HCT116 (cell line): ENCODE measurements at regions of chr7 and their contacts with region 1.

Region 1: GRCh38 chr7:100874577-100875355 is at the start of gene SRRT:
- DNase-seq: peak; percentile 96
- ATAC-seq: peak; percentile 92
- H3K4me3 ChIP-seq: peak within 1 kb of the TSS; percentile 97 to 98
- H3K27ac ChIP-seq: peak within 1 kb of the TSS; percentile 84
- H3K4me1 ChIP-seq: peaks cover 12 to 24% of the 10 kb centered on the region in 2 experiments
- H3K27me3 ChIP-seq: no peaks in the 10 kb centered on the region
- CTCF ChIP-seq: peak in 1 of 3 experiments; percentile 15; a peak in 1 of 6 replicates
- POLR2A ChIP-seq: peak; percentile 79
- RAD21 ChIP-seq: no peak
- total RNA-seq, gene SRRT: 252 TPM

Region 2: DNA sequence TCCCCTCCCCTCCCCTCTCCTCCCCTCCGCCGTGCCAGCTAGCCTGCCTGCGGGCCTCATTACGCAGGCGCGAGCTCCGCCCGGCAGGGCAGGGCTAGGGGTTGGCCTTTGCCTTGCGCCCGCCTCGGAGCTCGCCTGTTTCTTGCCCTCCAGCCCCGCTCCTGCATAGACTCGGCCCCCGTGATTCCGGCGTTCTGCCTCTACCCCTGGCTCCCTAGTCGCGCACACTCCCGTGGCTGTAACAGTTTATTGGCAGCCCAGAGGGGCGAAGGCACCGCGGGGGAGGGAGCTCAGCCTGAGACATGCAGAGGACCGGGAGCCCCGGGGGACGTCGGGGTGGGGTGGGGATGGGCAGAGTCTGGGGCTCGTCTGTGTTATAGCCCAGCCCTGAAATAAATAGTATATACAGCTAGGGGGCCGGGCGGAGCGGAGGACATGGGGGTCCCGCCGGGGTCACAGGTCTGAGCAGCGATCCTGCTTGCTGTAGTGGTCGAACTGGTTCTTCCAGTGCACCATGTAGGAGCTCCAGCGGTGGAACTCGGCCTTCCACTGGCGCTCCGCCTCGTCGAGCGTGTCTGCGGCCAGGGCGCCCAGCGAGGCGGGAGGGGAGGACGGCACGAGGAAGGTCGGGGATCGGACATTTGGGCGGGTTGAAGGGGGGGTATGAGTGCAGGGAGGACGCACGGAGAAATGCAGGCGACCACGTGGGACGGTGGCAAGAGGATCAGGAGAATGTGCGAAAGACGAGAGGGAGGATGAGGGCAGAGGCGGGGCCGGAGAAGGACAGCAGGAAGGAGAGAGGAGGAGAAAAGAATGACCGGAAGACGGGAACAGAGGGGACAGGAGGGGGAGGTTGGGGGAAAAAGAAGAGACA is 15.2 kb after region 1 on chr7:
- CTCF ChIA-PET with region 1: interaction called, 5 read pairs
- POLR2A ChIA-PET with region 1: interaction called, 31 read pairs
- RAD21 ChIA-PET with region 1: interaction called in 1 of 2 experiments, 4 read pairs
- intact Hi-C with region 1: no loop called
- DNase-seq: peak; percentile 80
- ATAC-seq: peak; percentile 88
- H3K4me3 ChIP-seq: peak overlapping the region; percentile 63 to 83
- H3K27ac ChIP-seq: peak overlapping the region; percentile 85
- H3K4me1 ChIP-seq: peaks cover 8 to 52% of the 10 kb centered on the region in 2 experiments
- H3K27me3 ChIP-seq: no peaks in the 10 kb centered on the region
- CTCF ChIP-seq: no peak
- POLR2A ChIP-seq: peak; percentile 84
- RAD21 ChIP-seq: no peak

Region 3: DNA sequence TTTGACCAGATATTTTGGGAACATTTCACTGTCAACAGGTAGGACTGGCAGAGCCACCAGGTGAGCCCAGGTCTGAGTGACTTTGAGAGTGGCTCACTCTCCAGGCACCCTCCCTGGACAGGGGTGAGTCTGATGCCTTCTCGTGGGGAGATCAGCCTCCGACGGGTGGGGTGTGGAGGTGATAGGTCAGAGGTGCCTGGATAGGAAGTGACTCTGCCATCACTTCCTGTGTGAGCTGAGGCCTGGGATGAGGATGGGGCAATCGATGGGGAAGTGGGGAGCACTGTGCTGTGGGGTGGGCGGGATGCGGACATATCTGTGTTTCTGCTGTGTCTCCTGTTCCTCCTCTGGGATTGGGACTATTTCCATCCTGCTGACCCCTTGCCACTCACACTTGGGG is 412.3 kb after region 1 on chr7:
- CTCF ChIA-PET with region 1: no interaction called
- POLR2A ChIA-PET with region 1: no interaction called
- RAD21 ChIA-PET with region 1: no interaction called
- intact Hi-C with region 1: no loop called
- DNase-seq: no peak
- ATAC-seq: no peak
- H3K4me3 ChIP-seq: no peak overlapping the region
- H3K27ac ChIP-seq: no peak overlapping the region
- H3K4me1 ChIP-seq: peaks cover 4 to 6% of the 10 kb centered on the region in 2 experiments; a peak in 2 of 4 replicates
- H3K27me3 ChIP-seq: no peaks in the 10 kb centered on the region
- CTCF ChIP-seq: no peak
- POLR2A ChIP-seq: no peak
- RAD21 ChIP-seq: no peak